ENCODE measurements at regions of chrX and their contacts with region 1.

Region 1: DNA sequence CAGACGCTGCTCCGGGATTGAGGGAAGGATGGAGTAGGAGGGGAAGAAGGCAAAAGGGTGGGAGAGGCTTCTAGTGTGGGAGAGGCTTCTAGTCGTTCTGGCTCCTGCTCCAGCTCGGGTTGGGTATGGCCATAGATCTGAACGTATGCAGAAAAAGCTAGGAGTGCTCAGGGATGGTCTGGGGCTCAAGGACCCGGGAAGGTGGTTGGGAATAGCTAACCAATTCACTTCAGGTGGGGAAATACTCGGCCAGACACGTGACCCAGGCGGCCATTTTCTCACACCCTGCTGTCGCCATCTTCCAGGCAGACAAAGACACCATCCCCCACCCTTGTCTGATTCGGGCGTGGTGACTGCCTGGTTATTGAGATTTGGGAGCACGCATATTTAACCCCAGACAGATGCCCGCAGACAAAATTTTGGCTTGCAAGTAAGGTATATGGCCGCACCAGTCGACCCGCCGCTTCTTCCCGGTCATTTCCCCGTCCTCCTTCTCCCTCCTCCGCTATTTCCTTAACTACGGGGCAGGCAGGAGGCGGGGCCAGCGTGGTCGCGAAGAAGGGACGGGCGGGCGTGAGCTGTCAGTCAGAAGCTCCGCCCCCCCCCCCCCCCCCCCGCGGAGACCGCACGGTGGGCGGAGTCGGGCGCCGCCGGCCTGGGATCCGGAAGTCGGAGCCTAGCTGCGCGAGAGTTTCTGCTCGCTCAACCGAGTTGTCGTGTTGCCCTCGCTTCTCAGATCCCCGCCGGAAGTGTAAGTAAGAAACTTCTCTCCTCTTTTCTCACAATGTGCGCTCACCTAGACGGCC is at the start of gene GNL3L:
- DNase-seq: peak; percentile 85 to 88
- ATAC-seq: peak; percentile 92 to 98 (median 97)
- H3K4me3 ChIP-seq: peak within 1 kb of the TSS; percentile 47 to 79 (median 70)
- H3K27ac ChIP-seq: peak within 1 kb of the TSS; percentile 74 to 93 (median 90)
- H3K4me1 ChIP-seq: peaks cover 0 to 25% (median 7%) of the 10 kb centered on the region in 9 donors
- H3K27me3 ChIP-seq: no peaks in the 10 kb centered on the region
- CTCF ChIP-seq: no peak
- total RNA-seq, gene GNL3L: 22.8 to 47.2 (median 33.2) TPM

Region 2: GRCh38 chrX:54044126-54044876 is 485.5 kb before region 1 on chrX and contains the start of gene PHF8:
- intact Hi-C with region 1: loop called in 1 of 10 experiments (anchors 5 kb)
- DNase-seq: peak; percentile 94 to 95
- ATAC-seq: peak; percentile 94 to 97 (median 95)
- H3K4me3 ChIP-seq: peak within 1 kb of the TSS; percentile 47 to 88 (median 76)
- H3K27ac ChIP-seq: peak within 1 kb of the TSS; percentile 85 to 98 (median 96)
- H3K4me1 ChIP-seq: peaks cover 0 to 8% (median 0%) of the 10 kb centered on the region in 9 donors
- H3K27me3 ChIP-seq: no peaks in the 10 kb centered on the region
- CTCF ChIP-seq: peak in 1 of 9 donors; percentile 12
- total RNA-seq, gene PHF8: 9.3 to 12.9 (median 11.3) TPM

Region 3: DNA sequence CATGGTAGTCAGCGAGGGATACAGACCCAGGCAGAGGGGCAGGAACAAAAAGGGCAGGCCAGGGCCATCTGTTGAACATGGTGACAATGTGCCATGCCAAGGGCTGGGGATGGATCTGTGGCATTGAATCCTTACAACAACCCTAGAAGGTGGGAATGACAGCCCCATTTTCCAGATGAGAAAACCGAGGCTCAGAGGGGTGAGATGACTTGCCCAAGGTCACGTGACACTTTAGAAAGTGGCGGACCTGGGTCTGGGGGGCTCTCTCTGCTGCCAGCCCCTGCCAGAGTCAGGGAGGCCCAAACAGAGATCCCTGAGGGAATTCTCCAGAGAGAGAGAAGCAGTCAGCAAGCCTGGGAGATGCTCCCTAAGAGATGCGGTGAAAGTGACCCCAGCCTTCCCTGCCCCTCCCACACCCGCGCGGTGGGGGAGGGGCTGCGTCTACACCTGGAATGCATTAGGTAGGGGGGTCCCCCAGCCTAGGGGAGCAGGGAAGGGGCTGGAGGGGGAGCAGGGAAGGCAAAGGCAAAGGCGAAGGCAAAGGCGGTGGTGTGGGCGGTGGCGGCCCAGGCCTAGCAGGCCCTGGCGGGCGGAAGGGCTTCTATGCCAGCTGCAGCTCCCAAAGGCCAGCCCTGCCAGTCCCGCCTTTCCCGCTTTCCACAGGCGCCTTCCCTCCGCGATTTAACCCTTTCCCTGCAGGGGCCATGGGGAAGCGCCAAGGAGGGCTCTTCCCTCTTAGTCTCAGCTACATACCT is 46.7 kb before region 1 on chrX:
- intact Hi-C with region 1: loop called in 1 of 10 experiments (anchors 5 kb)
- DNase-seq: peak in 1 of 2 donors; percentile 27
- ATAC-seq: peak in 5 of 8 donors; percentile 4 to 53 (median 33)
- H3K4me3 ChIP-seq: peak overlapping the region in 1 of 10 donors; percentile 2
- H3K27ac ChIP-seq: peak overlapping the region; percentile 16 to 81 (median 62)
- H3K4me1 ChIP-seq: peaks cover 0 to 45% (median 17%) of the 10 kb centered on the region in 9 donors
- H3K27me3 ChIP-seq: peaks cover 0 to 4% (median 0%) of the 10 kb centered on the region in 7 donors
- CTCF ChIP-seq: no peak

Region 4: GRCh38 chrX:54495814-54496516 is 33.8 kb before region 1 on chrX and contains the start of gene FGD1:
- intact Hi-C with region 1: loop called in 1 of 10 experiments (anchors 2 kb)
- DNase-seq: peak; percentile 70 to 79
- ATAC-seq: peak; percentile 85 to 96 (median 93)
- H3K4me3 ChIP-seq: peak within 1 kb of the TSS; percentile 41 to 76 (median 66)
- H3K27ac ChIP-seq: peak within 1 kb of the TSS in 9 of 10 donors; percentile 52 to 78 (median 71)
- H3K4me1 ChIP-seq: peaks cover 0 to 15% (median 0%) of the 10 kb centered on the region in 9 donors
- H3K27me3 ChIP-seq: peaks cover 0 to 50% (median 0%) of the 10 kb centered on the region in 7 donors
- CTCF ChIP-seq: no peak
- total RNA-seq, gene FGD1: 4.4 to 6.6 (median 5.3) TPM

Region 5: GRCh38 chrX:54639346-54640102 is 109.8 kb after region 1 on chrX:
- intact Hi-C with region 1: loop called in 1 of 10 experiments (anchors 10 kb)
- DNase-seq: peak; percentile 92 to 95
- ATAC-seq: peak; percentile 95 to 99 (median 98)
- H3K4me3 ChIP-seq: peak overlapping the region in 9 of 10 donors; percentile 23 to 59 (median 53)
- H3K27ac ChIP-seq: peak overlapping the region; percentile 78 to 94 (median 90)
- H3K4me1 ChIP-seq: peaks cover 0 to 16% (median 4%) of the 10 kb centered on the region in 9 donors
- H3K27me3 ChIP-seq: no peaks in the 10 kb centered on the region
- CTCF ChIP-seq: peak; percentile 41 to 77 (median 64)